OCI-LY7 (cell line): ENCODE measurements at regions of chr19 and their contacts with region 1.

Region 1: DNA sequence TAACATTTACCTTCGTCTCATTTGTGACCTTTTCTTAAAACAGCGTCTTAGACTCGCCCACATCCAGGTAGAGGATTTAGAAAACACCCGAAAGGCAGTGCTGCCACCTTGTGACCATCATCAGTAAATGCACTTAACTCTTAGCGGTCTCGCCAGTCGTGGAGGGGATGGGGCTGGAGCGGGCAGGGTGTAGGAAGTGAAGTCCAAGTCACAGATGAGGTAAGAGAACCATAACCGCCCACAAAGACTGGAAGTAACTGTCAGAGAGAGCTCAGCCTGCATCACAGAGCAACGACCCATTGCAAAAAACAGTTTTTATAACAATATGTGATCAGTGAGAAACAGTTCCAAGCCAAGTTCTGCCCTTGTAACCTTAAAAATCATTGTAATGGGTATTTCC is 10.7 kb upstream of the CEACAM3 start:
- DNase-seq: peak; percentile 88
- H3K4me3 ChIP-seq: peak overlapping the region; percentile 15
- H3K27ac ChIP-seq: no peak overlapping the region
- H3K4me1 ChIP-seq: peaks cover 22% of the 10 kb centered on the region
- CTCF ChIP-seq: peak; percentile 94

Region 2: GRCh38 chr19:41753936-41754529 is 31.6 kb before region 1 on chr19:
- CTCF ChIA-PET with region 1: interaction called, 4 read pairs
- POLR2A ChIA-PET with region 1: interaction called, 3 read pairs
- intact Hi-C with region 1: loop called (anchors 1 kb)
- DNase-seq: peak; percentile 70
- H3K4me3 ChIP-seq: no peak overlapping the region
- H3K27ac ChIP-seq: no peak overlapping the region
- H3K4me1 ChIP-seq: peaks cover 10% of the 10 kb centered on the region
- CTCF ChIP-seq: peak; percentile 89

Region 3: DNA sequence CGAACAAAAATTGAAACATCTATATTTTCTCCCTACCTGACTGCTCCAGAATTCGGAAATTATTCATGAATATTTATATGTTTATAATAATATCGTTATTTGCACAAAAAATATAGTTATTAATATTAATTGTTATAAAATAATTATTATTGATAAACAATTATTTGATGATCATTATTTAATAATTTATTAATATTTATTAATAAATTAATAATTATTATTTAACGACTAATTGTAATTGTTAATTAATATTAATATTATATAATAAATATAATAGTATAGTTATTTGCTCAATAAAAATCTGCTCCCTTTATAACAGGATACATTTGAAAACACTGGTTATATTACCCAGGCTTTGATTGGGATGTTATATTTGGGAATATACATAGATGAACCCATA is 16.0 kb before region 1 on chr19:
- CTCF ChIA-PET with region 1: no interaction called
- POLR2A ChIA-PET with region 1: no interaction called
- intact Hi-C with region 1: no loop called
- DNase-seq: no peak
- H3K4me3 ChIP-seq: no peak overlapping the region
- H3K27ac ChIP-seq: no peak overlapping the region
- H3K4me1 ChIP-seq: no peaks in the 10 kb centered on the region
- CTCF ChIP-seq: no peak